Activated T-helper 2 cell treated with anti-CD3 and anti-CD28 coated beads, Interferon-gamma antibody, Interleukin-2, Interleukin-4, amounts not matched to agents 10 μg/mL and 5 μg/mL and 100 μg/mL, durations not matched to agents 14 hours and 24 hours and 36 hours (primary cell): ENCODE measurements at regions of chr2 and their contacts with region 1.

Region 1: DNA sequence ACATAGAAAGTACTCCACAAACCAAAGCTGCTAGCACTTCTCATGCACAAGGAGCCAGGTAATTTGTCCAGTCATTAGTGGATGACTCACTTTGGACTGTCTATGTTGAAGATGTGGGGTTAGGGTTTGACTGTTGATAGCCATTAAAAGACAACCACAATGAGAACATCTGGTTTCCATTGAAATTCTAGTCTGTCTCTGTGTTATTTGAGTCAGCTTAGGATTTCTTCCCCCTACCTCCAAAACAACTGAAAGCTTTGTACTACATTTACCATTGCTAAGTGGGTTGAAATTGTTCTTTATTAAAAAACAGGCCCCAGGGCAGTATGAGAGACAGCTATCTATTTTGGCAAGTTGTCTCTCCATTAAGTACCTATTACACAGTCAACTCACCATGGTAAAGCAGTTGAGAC is 50.2 kb upstream of the ANKRD44 start:
- DNase-seq: no peak
- H3K4me3 Mint-ChIP-seq: no peak overlapping the region
- H3K27ac Mint-ChIP-seq: no peak overlapping the region
- H3K4me1 Mint-ChIP-seq: peaks cover 23% of the 10 kb centered on the region
- H3K27me3 Mint-ChIP-seq: no peaks in the 10 kb centered on the region

Region 2: GRCh38 chr2:197322724-197323720 is 37.7 kb before region 1 on chr2:
- intact Hi-C with region 1: loop called (anchors 5 kb)
- DNase-seq: peak; percentile 20
- H3K4me3 Mint-ChIP-seq: peak overlapping the region; percentile 62
- H3K27ac Mint-ChIP-seq: peak overlapping the region; percentile 92
- H3K4me1 Mint-ChIP-seq: peaks cover 56% of the 10 kb centered on the region
- H3K27me3 Mint-ChIP-seq: no peaks in the 10 kb centered on the region

Region 3: DNA sequence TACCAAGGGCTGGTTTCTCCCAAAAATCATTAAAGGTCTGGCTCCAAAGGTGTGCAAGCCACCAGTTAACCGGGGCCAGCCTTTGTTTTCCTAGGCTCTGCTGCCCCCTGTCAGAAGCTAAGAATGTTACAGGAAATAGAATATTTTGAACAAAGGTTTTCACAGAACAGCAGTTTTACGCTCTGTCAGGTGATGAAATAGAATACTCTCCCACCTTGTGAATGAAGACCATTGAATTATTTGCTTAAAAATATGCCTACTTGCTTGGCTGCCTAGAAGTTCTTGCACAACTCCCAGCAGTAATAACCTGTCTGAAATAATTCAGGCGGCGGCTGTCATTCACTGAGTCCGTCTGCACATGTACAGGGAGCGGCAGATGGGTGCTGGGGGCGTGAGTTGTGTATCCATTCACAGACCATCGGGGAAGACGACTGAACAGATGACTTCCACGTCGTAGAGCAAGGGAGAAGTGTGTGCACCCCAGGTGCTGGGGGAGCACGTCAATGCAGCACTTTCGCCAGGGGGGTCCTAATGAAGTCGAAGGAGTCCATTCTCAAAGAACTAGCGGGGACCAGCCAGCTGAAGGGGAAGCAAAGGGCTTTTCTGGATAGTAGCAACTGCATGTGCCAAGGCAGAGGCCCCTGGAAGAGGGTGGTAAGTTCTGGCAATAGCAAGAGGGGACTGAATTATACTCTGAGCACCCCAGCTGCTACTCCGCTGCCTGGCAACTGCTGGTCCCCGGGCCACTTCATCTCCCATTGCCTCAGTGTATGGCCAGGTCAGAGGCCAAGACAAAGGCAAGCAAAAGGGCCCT is 18.0 kb after region 1 on chr2:
- intact Hi-C with region 1: no loop called
- DNase-seq: peak; percentile 41
- H3K4me3 Mint-ChIP-seq: no peak overlapping the region
- H3K27ac Mint-ChIP-seq: peak overlapping the region; percentile 0
- H3K4me1 Mint-ChIP-seq: peaks cover 18% of the 10 kb centered on the region
- H3K27me3 Mint-ChIP-seq: peaks cover 3% of the 10 kb centered on the region